GM18951 (cell line): ENCODE measurements at regions of chr10 and their contacts with region 1.

Region 1: GRCh38 chr10:27446091-27446918 is 57.8 kb upstream of the RAB18 start:
- POLR2A ChIP-seq: no peak

Region 2: DNA sequence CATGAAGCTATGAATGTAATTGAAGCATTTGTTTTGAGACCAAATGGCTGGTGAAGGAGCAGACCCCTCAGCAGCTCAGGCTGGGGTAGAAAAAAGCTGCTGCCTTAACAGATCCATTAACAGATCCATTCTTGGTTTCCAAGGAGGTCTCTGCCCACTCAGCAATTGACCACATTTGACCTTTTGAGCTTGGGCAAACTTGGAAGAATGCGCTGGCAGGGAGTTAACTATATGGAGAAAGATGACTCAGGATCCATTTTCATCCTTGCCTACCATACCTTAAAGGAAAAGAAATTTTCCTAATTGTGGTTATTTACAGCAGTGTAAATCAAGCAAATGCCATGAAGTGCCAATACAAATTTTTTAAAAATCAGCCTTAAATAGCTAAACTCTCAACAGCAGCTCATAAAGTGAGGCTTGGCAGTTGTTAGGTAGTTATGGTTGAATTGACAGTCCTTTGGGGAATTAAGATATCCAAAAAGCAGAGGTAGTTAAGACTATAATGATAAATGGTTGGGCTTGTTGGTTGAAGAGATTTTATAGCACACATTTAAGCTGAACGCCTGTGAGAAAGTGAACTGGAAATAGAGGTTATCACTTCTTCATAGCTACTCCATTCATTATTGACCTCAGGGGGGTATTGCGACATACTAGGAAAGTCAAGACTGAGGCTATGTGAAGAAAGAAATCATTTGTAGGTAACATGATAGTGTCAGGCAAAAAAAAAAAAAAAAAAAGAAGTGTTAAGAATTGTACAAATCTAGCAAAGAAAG is 215.4 kb after region 1 on chr10:
- in situ Hi-C with region 1: loop called (anchors 25 kb)
- POLR2A ChIP-seq: no peak